ENCODE measurements at regions of chr21 and their contacts with region 1.

Region 1: DNA sequence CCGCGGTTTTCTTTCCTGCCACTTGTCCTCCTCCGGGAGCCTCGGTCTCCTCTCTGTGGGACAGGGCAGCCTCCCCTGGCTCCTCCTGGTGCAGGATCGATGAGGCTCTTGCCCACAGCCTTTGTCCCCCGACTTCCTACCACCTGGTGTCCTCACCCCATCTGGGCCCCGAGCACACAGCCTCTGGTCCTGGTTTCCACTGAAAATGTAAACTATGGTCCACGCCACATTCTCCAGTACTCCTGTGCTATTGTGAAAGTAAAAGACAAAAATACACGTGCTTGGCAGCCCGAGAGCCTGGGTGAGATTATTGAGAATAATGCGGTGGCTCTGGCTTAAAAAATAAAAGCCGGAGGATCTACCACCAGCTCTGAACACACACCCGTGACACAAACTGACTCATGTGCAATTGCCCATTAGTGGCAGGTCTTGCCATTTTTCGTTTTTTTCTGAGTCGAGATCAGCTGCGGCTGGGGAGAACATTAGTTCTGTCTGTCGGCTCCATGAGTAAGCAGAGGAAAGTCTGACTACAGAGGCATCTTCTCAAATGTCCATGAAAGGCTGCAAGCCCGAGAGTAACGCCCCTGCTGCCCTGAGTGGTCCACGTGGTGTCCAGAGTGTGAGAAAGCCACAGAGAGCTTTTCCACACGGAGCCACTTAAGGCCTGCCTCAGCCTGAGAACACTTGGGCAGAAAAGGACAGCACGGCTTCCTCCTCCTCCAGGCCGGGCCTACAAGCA is 5.7 kb upstream of the COL6A2 start:
- DNase-seq: peak in 1 of 2 donors; percentile 40
- H3K4me3 ChIP-seq: peak overlapping the region in 1 of 3 donors; percentile 47
- H3K27ac ChIP-seq: peak overlapping the region; percentile 80 to 93
- H3K4me1 ChIP-seq: no peaks in the 10 kb centered on the region
- H3K27me3 ChIP-seq: no peaks in the 10 kb centered on the region
- CTCF ChIP-seq: no peak
- POLR2A ChIP-seq: no peak

Region 2: GRCh38 chr21:45287438-45288391 is 804.5 kb before region 1 on chr21 and contains the start of gene POFUT2:
- intact Hi-C with region 1: loop called (anchors 5 kb)
- DNase-seq: peak; percentile 94 to 99
- H3K4me3 ChIP-seq: peak within 1 kb of the TSS; percentile 65 to 85 (median 75)
- H3K27ac ChIP-seq: peak within 1 kb of the TSS; percentile 86
- H3K4me1 ChIP-seq: peaks cover 8 to 9% of the 10 kb centered on the region in 2 donors
- H3K27me3 ChIP-seq: no peaks in the 10 kb centered on the region
- CTCF ChIP-seq: no peak
- POLR2A ChIP-seq: no peak
- total RNA-seq, gene POFUT2: 20.0 to 22.9 (median 22.1) TPM

Region 3: GRCh38 chr21:46022551-46023525 is 69.4 kb before region 1 on chr21:
- intact Hi-C with region 1: no loop called
- DNase-seq: no peak
- H3K4me3 ChIP-seq: peak overlapping the region; percentile 7 to 34 (median 15)
- H3K27ac ChIP-seq: peak overlapping the region; percentile 7 to 34
- H3K4me1 ChIP-seq: no peaks in the 10 kb centered on the region
- H3K27me3 ChIP-seq: no peaks in the 10 kb centered on the region
- CTCF ChIP-seq: no peak
- POLR2A ChIP-seq: no peak

Region 4: GRCh38 chr21:46078322-46078977 is 13.7 kb before region 1 on chr21:
- intact Hi-C with region 1: no loop called
- DNase-seq: peak; percentile 14 to 37
- H3K4me3 ChIP-seq: no peak overlapping the region
- H3K27ac ChIP-seq: peak overlapping the region in 1 of 2 donors; percentile 79
- H3K4me1 ChIP-seq: peaks cover 0 to 4% of the 10 kb centered on the region in 2 donors
- H3K27me3 ChIP-seq: no peaks in the 10 kb centered on the region
- CTCF ChIP-seq: no peak
- POLR2A ChIP-seq: no peak